Head of caudate nucleus (tissue), 42 donors: ENCODE measurements at regions of chr18 and their contacts with region 1.

Region 1: DNA sequence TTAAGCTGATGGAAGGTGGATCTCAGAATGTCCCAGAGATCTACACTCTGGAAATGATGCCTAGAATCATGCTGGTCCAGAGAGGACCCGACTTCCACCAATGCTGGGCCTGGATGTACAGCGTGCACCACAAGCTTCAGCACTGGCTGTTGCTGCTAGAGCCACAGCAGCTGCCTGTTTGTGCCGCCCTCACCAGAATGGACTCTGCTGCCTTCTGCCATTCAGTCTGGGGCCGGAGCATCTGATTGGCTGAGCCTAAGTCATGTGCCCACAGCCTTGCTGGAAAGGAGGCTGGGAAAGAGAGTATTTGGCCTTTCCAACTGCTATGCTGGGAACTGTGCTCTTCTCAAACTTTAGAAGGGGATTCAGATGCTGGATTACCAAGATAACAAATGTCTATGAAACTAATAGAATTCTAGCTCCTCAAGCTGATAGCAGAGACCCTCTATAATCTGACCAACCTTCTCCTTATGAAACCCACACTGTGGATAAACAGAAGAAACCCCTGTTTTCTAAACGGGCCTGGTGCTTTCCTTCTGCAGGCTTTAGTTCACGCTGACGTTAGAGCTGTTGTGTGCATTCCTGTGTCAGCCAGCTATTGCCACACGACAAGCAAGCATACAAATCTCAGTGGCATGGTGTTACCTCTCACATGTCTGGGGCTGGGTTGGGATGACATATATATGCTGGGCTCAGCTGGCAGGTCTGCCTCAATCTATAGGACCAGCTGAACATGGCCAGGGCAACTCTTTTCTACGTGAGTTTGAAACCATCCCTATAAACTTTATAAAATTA is 4.1 kb upstream of the LOXHD1 start:
- DNase-seq: peak; percentile 43 to 94 (median 88)

Region 2: GRCh38 chr18:46148810-46149209 is 512.3 kb before region 1 on chr18:
- intact Hi-C with region 1: loop called (anchors 10 kb)
- DNase-seq: peak in 26 of 42 donors; percentile 11 to 81 (median 41)

Region 3: GRCh38 chr18:46173393-46174341 is 487.5 kb before region 1 on chr18:
- intact Hi-C with region 1: loop called (anchors 10 kb)
- DNase-seq: peak; percentile 83 to 97 (median 94)

Region 4: GRCh38 chr18:46281185-46282176 is 379.7 kb before region 1 on chr18:
- intact Hi-C with region 1: loop called (anchors 5 kb)
- DNase-seq: peak; percentile 56 to 86 (median 74)

Region 5: GRCh38 chr18:46555724-46556123 is 105.4 kb before region 1 on chr18:
- intact Hi-C with region 1: loop called (anchors 10 kb)
- DNase-seq: peak in 41 of 42 donors; percentile 29 to 87 (median 63)